Endothelial cell of umbilical vein (primary cell): ENCODE measurements at regions of chr4 and their contacts with region 1.

Region 1: GRCh38 chr4:123832173-123833026 is 435.8 kb downstream of the SPRY1 start:
- DNase-seq: peak; percentile 86
- H3K4me3 ChIP-seq: no peak overlapping the region
- H3K27ac ChIP-seq: peak overlapping the region; percentile 93
- H3K4me1 ChIP-seq: peaks cover 38% of the 10 kb centered on the region
- H3K27me3 ChIP-seq: no peaks in the 10 kb centered on the region
- CTCF ChIP-seq: no peak
- POLR2A ChIP-seq: peak; percentile 24

Region 2: GRCh38 chr4:123340381-123340701 is 492.1 kb before region 1 on chr4:
- CTCF ChIA-PET with region 1: no interaction called
- POLR2A ChIA-PET with region 1: no interaction called
- dilution Hi-C with region 1: no loop called
- intact Hi-C with region 1: loop called (anchors 2 kb)
- DNase-seq: peak; percentile 92
- H3K4me3 ChIP-seq: no peak overlapping the region
- H3K27ac ChIP-seq: peak overlapping the region; percentile 90
- H3K4me1 ChIP-seq: peaks cover 58% of the 10 kb centered on the region
- H3K27me3 ChIP-seq: no peaks in the 10 kb centered on the region
- CTCF ChIP-seq: no peak
- POLR2A ChIP-seq: peak; percentile 29

Region 3: DNA sequence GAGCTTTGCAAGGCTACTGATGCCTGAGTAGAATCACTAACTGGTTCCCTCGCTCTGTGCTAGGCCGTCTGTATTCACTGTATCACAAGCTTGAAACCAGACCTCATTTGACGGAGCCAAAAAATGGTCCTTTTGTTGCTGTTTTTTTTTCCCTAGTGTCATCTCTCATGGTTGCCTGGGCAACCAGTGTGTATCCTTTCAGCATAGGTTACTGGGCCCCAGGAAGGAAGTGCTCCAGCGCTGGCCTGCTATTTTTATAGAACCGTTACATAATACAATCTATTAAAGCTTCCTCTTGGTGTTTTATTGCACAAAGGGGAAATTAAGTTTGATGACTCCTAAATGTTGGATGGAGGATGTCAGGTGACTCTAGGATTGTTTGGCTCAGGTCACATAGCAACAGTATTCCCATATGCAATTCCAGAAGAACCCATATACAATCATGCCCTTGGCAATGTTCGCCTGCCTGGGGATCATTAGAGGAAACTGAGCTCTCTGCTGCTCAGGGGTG is 215.4 kb before region 1 on chr4:
- CTCF ChIA-PET with region 1: no interaction called
- POLR2A ChIA-PET with region 1: no interaction called
- dilution Hi-C with region 1: no loop called
- intact Hi-C with region 1: no loop called
- DNase-seq: peak; percentile 81
- H3K4me3 ChIP-seq: no peak overlapping the region
- H3K27ac ChIP-seq: no peak overlapping the region
- H3K4me1 ChIP-seq: peaks cover 19% of the 10 kb centered on the region
- H3K27me3 ChIP-seq: no peaks in the 10 kb centered on the region
- CTCF ChIP-seq: no peak
- POLR2A ChIP-seq: no peak

Region 4: GRCh38 chr4:123776254-123776653 is 56.1 kb before region 1 on chr4:
- CTCF ChIA-PET with region 1: interaction called, 12 read pairs
- POLR2A ChIA-PET with region 1: no interaction called
- dilution Hi-C with region 1: no loop called
- intact Hi-C with region 1: loop called (anchors 1 kb)
- DNase-seq: no peak
- H3K4me3 ChIP-seq: no peak overlapping the region
- H3K27ac ChIP-seq: no peak overlapping the region
- H3K4me1 ChIP-seq: peaks cover 11% of the 10 kb centered on the region
- H3K27me3 ChIP-seq: no peaks in the 10 kb centered on the region
- CTCF ChIP-seq: no peak
- POLR2A ChIP-seq: no peak

Region 5: DNA sequence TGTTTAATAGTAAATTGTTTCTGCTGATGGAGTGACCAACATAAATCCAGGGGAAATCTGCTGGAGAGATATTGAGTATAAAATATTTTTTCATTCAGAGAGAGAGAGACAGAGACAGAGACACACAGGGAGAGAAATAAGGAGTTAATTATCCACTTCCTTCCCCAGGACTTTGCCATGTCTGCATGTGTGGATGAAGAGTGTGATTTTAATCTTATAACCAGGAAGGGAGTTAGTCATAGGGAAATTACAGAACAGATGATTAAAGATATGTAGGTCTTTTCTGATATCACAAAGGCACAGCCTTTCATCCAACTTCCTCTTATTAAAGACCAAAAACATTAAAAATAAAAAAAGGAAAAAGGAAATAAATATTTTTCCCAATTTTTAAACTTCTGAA is 90.4 kb after region 1 on chr4:
- CTCF ChIA-PET with region 1: no interaction called
- POLR2A ChIA-PET with region 1: no interaction called
- dilution Hi-C with region 1: no loop called
- intact Hi-C with region 1: loop called (anchors 1 kb)
- DNase-seq: peak; percentile 91
- H3K4me3 ChIP-seq: no peak overlapping the region
- H3K27ac ChIP-seq: peak overlapping the region; percentile 93
- H3K4me1 ChIP-seq: peaks cover 20% of the 10 kb centered on the region
- H3K27me3 ChIP-seq: no peaks in the 10 kb centered on the region
- CTCF ChIP-seq: no peak
- POLR2A ChIP-seq: peak; percentile 78

Region 6: GRCh38 chr4:123976285-123976684 is 143.9 kb after region 1 on chr4:
- CTCF ChIA-PET with region 1: no interaction called
- POLR2A ChIA-PET with region 1: no interaction called
- dilution Hi-C with region 1: no loop called
- intact Hi-C with region 1: loop called (anchors 1 kb)
- DNase-seq: peak; percentile 90
- H3K4me3 ChIP-seq: no peak overlapping the region
- H3K27ac ChIP-seq: peak overlapping the region; percentile 70
- H3K4me1 ChIP-seq: peaks cover 30% of the 10 kb centered on the region
- H3K27me3 ChIP-seq: no peaks in the 10 kb centered on the region
- CTCF ChIP-seq: no peak
- POLR2A ChIP-seq: no peak